ENCODE measurements at regions of chr5 and their contacts with region 1.

Region 1: DNA sequence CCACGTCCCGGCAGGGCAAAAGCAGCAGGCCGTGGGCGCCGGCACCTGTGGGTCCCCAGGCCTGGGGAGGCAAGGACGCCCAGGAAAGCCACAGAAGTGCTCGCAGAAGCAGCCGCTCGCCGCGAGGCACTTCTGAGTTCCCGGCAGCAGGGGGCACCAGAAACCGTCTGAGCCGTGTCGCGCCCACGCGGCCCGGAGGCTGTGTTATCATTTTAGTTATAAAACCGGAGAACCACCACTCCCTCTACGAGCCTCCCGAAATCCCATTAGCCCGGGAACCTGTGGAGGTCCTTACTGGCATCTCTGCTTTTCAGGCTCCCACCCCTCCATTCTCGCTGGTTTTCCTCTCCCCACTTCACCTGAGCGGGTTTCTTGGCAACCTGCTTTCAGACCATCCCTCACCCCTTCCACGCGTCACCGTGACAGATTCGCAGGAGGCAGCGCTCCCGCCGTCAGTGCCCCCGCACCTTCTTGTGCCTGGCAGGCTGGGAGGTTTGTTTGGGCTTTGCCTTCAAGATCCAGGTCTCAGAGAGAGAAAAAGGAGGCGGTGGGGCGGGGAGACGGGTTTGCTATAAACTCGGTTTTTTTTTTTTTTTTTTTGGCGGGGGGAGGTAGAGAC is 2.3 kb downstream of the GDNF start:
- DNase-seq: peak; percentile 59 to 86 (median 76)
- ATAC-seq: peak; percentile 65 to 83 (median 77)
- H3K4me3 ChIP-seq: peak overlapping the region; percentile 8 to 61 (median 48)
- H3K27ac ChIP-seq: peak overlapping the region in 3 of 12 donors; percentile 9 to 93 (median 24)
- H3K4me1 ChIP-seq: peaks cover 0 to 54% (median 26%) of the 10 kb centered on the region in 12 donors
- H3K27me3 ChIP-seq: peaks cover 22 to 99% (median 60%) of the 10 kb centered on the region in 9 donors
- CTCF ChIP-seq: peak; percentile 61 to 89 (median 78)
- POLR2A ChIP-seq: no peak

Region 2: DNA sequence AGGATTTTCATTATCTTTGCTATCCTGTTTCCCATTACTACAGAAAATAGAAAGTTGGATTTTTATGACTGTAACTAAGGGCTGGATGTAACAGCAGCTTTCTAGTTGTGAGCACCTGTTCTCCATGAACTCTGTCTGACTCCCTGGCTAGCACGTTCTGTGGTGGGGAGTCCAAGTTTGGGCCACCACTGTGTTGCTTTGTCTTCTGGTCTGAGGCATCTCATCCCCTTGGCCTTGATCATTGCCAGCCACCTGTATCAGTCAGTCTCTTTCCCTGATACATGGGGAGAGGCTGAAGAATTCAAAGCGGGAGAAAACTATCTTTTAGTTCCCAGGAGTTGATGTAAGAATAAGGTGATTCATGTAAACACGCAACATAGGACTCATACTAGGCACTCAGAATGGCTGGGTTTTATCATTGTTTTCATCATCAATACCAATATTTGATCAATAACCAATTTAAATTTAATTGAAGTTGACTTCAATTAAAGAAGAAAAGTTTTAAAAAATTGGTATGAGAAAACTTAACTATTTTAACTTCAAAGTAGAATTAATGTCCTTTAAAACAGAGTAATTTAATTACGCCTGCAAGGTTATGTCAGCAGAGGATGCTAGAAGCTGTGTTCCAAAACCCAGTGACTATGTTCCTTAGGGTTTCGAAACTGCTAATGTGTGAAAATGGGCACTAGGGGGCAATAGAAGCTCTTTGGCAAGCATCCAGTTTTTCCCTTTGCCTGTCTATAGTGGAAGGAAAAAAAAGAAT is 424.8 kb before region 1 on chr5:
- intact Hi-C with region 1: loop called in 1 of 10 experiments (anchors 5 kb)
- DNase-seq: peak in 2 of 5 donors; percentile 34 to 40
- ATAC-seq: peak; percentile 61 to 78 (median 76)
- H3K4me3 ChIP-seq: no peak overlapping the region
- H3K27ac ChIP-seq: no peak overlapping the region
- H3K4me1 ChIP-seq: no peaks in the 10 kb centered on the region
- H3K27me3 ChIP-seq: no peaks in the 10 kb centered on the region
- CTCF ChIP-seq: peak; percentile 59 to 89 (median 80)
- POLR2A ChIP-seq: no peak

Region 3: DNA sequence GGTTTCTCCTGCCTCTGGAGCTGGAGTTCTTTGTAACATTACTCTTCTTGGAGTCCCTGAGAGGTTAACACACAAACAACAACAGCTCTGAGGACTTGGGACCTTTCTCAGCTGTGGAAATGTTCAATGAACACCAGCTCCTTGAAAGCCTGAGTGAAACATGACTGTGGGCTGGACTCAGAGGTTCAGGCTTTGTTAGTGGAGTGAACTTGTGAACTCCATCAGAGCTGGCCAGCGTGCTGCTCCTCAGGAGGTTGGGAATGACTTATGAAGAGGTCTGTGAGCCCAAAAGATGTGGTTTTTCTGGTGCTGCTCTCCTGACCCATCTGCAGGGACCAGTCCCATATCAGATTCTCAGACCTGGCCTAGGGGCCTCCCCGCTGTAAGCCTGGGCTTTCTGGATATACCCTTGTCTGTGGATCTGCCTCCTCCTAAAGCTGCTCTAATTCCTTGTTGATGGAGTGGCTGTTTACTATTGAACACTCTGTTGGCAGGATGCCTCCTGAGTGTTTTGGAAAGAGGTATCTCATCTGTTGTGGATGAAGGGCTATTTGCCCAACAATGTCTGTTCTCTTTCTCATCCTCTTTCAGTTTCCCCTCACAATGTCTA is 172.3 kb after region 1 on chr5:
- intact Hi-C with region 1: loop called in 1 of 10 experiments (anchors 10 kb)
- DNase-seq: no peak
- ATAC-seq: no peak
- H3K4me3 ChIP-seq: no peak overlapping the region
- H3K27ac ChIP-seq: no peak overlapping the region
- H3K4me1 ChIP-seq: no peaks in the 10 kb centered on the region
- H3K27me3 ChIP-seq: no peaks in the 10 kb centered on the region
- CTCF ChIP-seq: no peak
- POLR2A ChIP-seq: no peak

Region 4: GRCh38 chr5:38193015-38193581 is 355.6 kb after region 1 on chr5:
- intact Hi-C with region 1: loop called (anchors 1 to 2 kb)
- DNase-seq: peak; percentile 50 to 71 (median 58)
- ATAC-seq: peak in 3 of 4 donors; percentile 78 to 81 (median 81)
- H3K4me3 ChIP-seq: no peak overlapping the region
- H3K27ac ChIP-seq: no peak overlapping the region
- H3K4me1 ChIP-seq: no peaks in the 10 kb centered on the region
- H3K27me3 ChIP-seq: peaks cover 0 to 20% (median 3%) of the 10 kb centered on the region in 9 donors
- CTCF ChIP-seq: peak; percentile 76 to 92 (median 84)
- POLR2A ChIP-seq: no peak

Measured in heart left ventricle (tissue), 16 donors.